ENCODE measurements at regions of chr4 and their contacts with region 1.

Region 1: GRCh38 chr4:154314248-154314647 is 177.4 kb downstream of the DCHS2 start:
- DNase-seq: no peak
- H3K4me3 ChIP-seq: no peak overlapping the region
- H3K27ac ChIP-seq: no peak overlapping the region
- H3K4me1 ChIP-seq: no peaks in the 10 kb centered on the region
- H3K27me3 ChIP-seq: no peaks in the 10 kb centered on the region
- CTCF ChIP-seq: no peak

Region 2: DNA sequence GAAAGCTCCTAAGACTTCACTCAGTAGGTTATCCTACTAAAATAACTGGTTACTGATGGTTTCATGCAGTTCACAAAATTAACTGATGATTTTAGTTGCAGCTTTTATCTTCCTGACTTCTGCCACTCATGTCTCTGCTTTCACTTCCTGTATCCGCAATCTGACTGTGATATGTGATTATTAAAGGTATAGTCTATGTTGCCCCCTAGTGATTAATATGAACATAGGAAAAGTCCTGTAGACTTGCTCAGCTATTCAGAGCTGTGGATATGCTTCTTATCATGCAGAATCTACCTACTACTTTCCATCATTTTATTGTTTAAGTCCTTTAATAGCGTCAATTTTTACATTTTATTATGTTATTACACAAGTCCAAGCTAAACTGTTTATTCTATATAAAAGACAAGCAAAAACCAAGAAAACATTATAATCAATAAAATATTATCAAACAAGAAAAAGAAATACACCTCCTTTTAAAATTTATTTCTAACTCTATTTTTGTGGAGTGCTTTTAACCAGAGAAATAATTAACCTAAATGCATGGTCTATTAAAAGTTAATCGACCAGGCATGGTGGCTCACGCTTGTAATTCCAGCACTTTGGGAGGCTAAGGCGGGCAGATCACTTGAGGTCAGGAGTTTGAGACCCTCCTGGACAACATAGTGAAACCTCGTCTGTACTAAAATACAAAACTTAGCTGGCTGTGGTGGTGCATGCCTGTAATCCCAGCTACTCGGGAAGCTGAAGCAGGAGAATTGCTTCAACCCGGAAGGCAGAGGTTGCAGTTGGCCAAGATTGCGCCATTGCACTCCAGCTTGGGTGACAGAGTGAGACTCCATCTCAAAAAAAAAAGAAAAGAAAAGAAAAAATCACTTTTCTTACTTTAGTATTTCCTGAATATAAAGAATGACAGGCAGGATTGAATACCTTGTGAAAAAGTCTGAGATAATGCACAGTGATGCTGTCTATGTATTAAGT is 670.6 kb before region 1 on chr4:
- CTCF ChIA-PET with region 1: no interaction called
- dilution Hi-C with region 1: no loop called
- in situ Hi-C with region 1: no loop called
- intact Hi-C with region 1: loop called (anchors 5 kb)
- DNase-seq: peak; percentile 54
- H3K4me3 ChIP-seq: no peak overlapping the region
- H3K27ac ChIP-seq: no peak overlapping the region
- H3K4me1 ChIP-seq: peaks cover 4% of the 10 kb centered on the region
- H3K27me3 ChIP-seq: no peaks in the 10 kb centered on the region
- CTCF ChIP-seq: peak; percentile 48 to 56

Region 3: DNA sequence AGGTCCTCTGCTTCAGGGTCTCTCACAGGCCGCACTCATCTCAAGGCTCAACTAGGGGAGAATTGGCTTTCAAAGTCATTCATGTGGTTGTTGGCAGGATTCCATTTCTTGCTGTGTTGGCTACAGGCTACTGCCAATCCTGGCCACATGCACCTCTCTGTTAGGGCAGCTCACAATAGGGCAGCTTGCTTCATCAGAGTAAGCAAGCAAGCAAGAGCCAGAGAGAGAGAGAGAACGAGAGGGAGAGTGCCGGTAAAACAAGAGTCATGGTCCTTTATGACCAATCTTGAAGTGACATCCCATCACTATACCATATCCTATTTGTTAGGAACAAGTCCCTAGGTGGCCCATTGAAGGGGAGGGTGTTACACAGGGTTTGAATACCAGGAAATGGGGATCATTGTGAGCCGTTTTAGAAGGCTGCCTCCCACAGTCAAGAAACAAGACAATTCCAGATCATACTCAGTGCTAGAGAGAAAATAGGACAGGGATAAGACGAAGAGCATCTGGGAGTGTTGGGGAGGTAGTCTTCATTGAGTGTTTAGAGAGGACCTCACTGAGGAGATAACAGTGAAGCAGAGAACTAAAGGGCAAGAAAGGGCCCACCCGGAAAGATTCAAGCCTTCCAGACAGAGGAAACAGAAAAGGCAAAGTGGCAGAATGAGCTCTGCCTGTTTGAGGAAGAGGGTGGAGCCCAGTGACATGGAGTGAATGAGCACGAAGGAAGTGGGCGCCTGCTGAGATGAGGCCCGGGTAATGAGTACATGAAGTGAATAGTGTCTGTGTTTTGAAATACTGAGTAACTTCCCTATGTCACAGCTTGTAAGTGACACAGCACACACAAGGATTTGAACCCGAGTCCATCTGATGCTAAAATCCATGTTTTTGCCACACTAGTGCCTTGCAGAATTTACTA is 662.9 kb before region 1 on chr4:
- CTCF ChIA-PET with region 1: no interaction called
- dilution Hi-C with region 1: no loop called
- in situ Hi-C with region 1: no loop called
- intact Hi-C with region 1: loop called (anchors 5 kb)
- DNase-seq: peak; percentile 43
- H3K4me3 ChIP-seq: no peak overlapping the region
- H3K27ac ChIP-seq: peak overlapping the region; percentile 77
- H3K4me1 ChIP-seq: peaks cover 32% of the 10 kb centered on the region
- H3K27me3 ChIP-seq: no peaks in the 10 kb centered on the region
- CTCF ChIP-seq: no peak

Region 4: GRCh38 chr4:154024097-154024694 is 290.1 kb before region 1 on chr4:
- CTCF ChIA-PET with region 1: no interaction called
- dilution Hi-C with region 1: no loop called
- in situ Hi-C with region 1: no loop called
- intact Hi-C with region 1: loop called (anchors 10 kb)
- DNase-seq: no peak
- H3K4me3 ChIP-seq: no peak overlapping the region
- H3K27ac ChIP-seq: no peak overlapping the region
- H3K4me1 ChIP-seq: no peaks in the 10 kb centered on the region
- H3K27me3 ChIP-seq: peaks cover 2% of the 10 kb centered on the region
- CTCF ChIP-seq: peak in 1 of 2 donors; percentile 22

Region 5: GRCh38 chr4:154073107-154073822 is 241.0 kb before region 1 on chr4:
- CTCF ChIA-PET with region 1: no interaction called
- dilution Hi-C with region 1: no loop called
- in situ Hi-C with region 1: no loop called
- intact Hi-C with region 1: loop called (anchors 1 kb)
- DNase-seq: peak; percentile 90
- H3K4me3 ChIP-seq: no peak overlapping the region
- H3K27ac ChIP-seq: peak overlapping the region; percentile 36
- H3K4me1 ChIP-seq: peaks cover 12% of the 10 kb centered on the region
- H3K27me3 ChIP-seq: no peaks in the 10 kb centered on the region
- CTCF ChIP-seq: no peak

Region 6: DNA sequence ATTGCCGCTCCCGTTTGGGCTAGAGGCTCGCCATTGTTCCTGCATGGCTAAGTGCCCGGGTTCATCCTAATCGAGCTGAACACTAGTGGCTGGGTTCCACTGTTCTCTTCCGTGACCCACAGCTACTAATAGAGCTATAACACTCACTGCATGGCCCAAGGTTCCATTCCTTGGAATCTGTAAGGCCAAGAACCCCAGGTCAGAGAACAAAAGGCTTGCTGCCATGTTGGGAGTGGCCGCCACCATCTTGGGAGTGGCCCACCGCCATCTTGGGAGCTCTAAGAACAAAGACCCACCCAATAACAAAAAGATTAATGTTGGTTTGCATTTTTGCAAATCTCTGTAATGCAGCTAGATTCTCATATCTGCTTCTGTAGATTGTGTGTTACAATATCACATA is 121.7 kb before region 1 on chr4:
- CTCF ChIA-PET with region 1: no interaction called
- dilution Hi-C with region 1: no loop called
- in situ Hi-C with region 1: no loop called
- intact Hi-C with region 1: no loop called
- DNase-seq: no peak
- H3K4me3 ChIP-seq: no peak overlapping the region
- H3K27ac ChIP-seq: no peak overlapping the region
- H3K4me1 ChIP-seq: no peaks in the 10 kb centered on the region
- H3K27me3 ChIP-seq: peaks cover 2% of the 10 kb centered on the region
- CTCF ChIP-seq: no peak